ENCODE measurements at regions of chr6 and their contacts with region 1.

Region 1: DNA sequence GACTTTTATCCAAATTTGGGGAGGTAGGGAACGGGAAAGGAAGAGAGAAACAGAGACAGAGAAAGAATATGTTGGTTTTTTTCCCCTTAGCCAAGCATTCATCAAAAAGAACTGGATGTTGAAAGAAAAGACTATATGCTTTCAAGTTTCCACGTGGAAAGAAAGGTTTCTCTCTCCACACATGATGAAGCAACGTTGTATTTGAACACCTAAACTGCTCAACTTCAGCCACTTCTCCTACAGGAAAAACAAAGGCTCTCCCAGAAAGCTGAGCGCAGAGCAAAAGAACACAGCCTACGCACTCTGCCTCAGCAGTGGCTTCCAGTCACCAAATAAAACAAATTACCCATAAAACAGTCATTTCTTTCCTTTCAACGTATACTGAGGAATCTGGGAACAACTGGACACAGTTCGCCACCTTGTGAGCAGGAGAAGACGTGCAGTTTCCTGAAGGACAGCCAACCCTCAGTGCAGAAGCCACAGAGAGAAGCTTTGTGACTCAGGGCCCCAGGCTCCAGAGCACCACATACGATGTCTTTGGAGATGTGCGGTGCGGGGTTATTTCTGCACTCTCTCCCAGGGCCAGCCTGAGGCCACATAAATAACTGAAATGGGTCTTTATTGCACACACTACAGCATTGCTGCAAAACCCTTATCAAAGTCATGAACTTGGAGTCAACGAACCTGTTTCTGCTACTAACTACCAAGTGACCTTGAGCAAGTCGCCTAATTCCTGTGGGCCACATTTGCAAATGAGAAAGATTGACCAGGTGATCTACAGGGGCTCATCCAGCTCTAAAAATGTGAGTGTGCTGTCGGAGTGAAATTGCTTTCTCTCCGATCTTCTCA is 10.1 kb downstream of the IL17F start:
- DNase-seq: peak; percentile 75
- H3K4me3 ChIP-seq: no peak overlapping the region
- H3K27ac ChIP-seq: no peak overlapping the region
- H3K4me1 ChIP-seq: no peaks in the 10 kb centered on the region
- H3K27me3 ChIP-seq: peaks cover 3% of the 10 kb centered on the region
- CTCF ChIP-seq: peak; percentile 67

Region 2: GRCh38 chr6:52098634-52099185 is 135.5 kb before region 1 on chr6:
- CTCF ChIA-PET with region 1: no interaction called
- dilution Hi-C with region 1: no loop called
- in situ Hi-C with region 1: no loop called
- intact Hi-C with region 1: loop called (anchors 1 kb)
- DNase-seq: no peak
- H3K4me3 ChIP-seq: no peak overlapping the region
- H3K27ac ChIP-seq: no peak overlapping the region
- H3K4me1 ChIP-seq: peaks cover 7% of the 10 kb centered on the region
- H3K27me3 ChIP-seq: no peaks in the 10 kb centered on the region
- CTCF ChIP-seq: no peak

Region 3: DNA sequence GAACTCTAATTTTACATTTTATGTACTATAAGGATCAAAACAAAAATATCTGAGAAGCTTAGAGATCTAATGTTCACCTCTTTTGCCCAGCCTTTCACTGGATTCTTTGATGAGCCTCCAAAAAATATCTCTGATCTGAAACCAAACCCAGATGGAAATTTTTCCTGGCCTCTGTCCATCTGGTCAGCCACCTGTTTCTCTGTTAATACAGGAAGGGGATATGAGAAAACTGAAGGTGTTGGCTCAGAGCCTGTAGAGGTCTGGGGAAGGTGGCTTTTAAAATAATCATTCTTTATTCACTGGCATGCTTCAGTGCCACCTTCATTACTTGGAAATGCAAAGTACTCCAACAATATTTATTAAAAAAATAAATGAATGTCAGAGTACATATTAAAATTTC is 58.9 kb after region 1 on chr6:
- CTCF ChIA-PET with region 1: no interaction called
- dilution Hi-C with region 1: no loop called
- in situ Hi-C with region 1: no loop called
- intact Hi-C with region 1: no loop called
- DNase-seq: no peak
- H3K4me3 ChIP-seq: no peak overlapping the region
- H3K27ac ChIP-seq: no peak overlapping the region
- H3K4me1 ChIP-seq: no peaks in the 10 kb centered on the region
- H3K27me3 ChIP-seq: no peaks in the 10 kb centered on the region
- CTCF ChIP-seq: no peak

Measured in mammary epithelial cell (primary cell).